IMR-90 (cell line): ENCODE measurements at regions of chr13 and their contacts with region 1.

Region 1: DNA sequence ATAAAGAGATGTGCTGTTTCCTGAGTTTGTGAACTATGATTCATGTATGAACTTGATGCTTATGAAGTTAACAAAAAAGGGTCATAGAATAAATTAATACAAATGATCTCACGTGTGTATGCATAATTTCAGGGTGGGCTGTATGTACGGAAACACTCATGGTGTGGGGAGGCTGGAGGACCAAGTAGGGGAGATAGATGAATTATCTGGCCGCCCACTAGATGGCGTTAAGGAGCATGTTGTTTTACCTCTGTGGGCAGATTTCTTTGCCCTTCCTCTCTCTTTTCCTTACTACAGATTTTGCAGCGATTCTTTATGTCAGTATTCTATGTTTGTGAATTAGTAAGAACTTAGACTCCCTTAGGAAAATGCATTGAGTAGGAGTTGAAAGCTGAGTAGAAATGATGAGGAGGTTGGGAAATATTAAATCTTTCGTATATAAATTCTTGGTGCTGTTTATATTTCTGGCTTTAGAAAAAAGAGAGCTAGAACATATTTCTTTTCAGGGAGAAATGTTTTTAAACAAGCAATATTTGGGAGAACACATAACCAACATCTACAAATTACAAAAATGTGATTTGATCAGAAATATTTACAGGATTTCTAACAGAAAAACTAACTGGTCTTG is 47.4 kb upstream of the TMTC4 start:
- DNase-seq: peak; percentile 50
- ATAC-seq: peak; percentile 93
- H3K4me3 ChIP-seq: no peak overlapping the region
- H3K27ac ChIP-seq: no peak overlapping the region
- H3K4me1 ChIP-seq: no peaks in the 10 kb centered on the region
- H3K27me3 ChIP-seq: peaks cover 3% of the 10 kb centered on the region
- CTCF ChIP-seq: peak; percentile 78
- POLR2A ChIP-seq: no peak
- RAD21 ChIP-seq: peak; percentile 65

Region 2: DNA sequence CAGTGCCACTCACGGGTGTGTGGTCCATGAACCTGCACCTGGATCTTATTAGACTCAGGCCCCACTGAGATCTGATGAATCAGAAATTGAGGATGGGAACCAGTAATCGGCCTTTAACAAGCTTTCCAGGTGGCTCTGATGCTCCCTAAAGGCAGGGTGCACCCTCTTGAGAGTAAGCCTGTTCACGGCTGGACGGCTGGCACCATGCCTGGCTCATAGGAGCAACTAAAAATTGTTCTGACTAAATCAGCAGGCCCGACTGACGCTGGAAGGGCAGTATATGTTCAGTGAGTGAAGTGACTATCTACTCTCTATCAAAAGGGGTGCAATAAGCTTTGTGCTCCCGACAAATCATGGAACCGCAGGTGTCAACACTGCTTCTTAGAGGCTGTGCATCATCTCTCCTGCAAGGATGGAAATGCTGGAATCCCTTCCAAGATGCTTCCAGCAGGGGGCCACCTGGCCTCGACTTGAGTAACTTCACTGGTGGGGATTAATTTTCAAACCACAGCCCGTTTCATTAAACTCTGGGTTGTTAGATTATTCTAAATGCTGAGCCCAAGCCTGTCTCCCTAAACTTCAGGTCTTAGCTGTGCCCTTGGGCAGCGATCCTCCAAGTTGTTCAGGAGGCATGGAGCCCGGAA is 75.8 kb before region 1 on chr13:
- CTCF ChIA-PET with region 1: no interaction called
- POLR2A ChIA-PET with region 1: no interaction called
- dilution Hi-C with region 1: no loop called
- in situ Hi-C with region 1: no loop called
- intact Hi-C with region 1: no loop called
- DNase-seq: peak; percentile 31
- ATAC-seq: peak; percentile 63; the same call in 1 of the 2 replicates
- H3K4me3 ChIP-seq: no peak overlapping the region
- H3K27ac ChIP-seq: no peak overlapping the region
- H3K4me1 ChIP-seq: no peaks in the 10 kb centered on the region; the same call in 1 of the 2 replicates
- H3K27me3 ChIP-seq: no peaks in the 10 kb centered on the region
- CTCF ChIP-seq: peak; percentile 48
- POLR2A ChIP-seq: no peak
- RAD21 ChIP-seq: peak; percentile 33; the same call in 1 of the 2 replicates

Region 3: DNA sequence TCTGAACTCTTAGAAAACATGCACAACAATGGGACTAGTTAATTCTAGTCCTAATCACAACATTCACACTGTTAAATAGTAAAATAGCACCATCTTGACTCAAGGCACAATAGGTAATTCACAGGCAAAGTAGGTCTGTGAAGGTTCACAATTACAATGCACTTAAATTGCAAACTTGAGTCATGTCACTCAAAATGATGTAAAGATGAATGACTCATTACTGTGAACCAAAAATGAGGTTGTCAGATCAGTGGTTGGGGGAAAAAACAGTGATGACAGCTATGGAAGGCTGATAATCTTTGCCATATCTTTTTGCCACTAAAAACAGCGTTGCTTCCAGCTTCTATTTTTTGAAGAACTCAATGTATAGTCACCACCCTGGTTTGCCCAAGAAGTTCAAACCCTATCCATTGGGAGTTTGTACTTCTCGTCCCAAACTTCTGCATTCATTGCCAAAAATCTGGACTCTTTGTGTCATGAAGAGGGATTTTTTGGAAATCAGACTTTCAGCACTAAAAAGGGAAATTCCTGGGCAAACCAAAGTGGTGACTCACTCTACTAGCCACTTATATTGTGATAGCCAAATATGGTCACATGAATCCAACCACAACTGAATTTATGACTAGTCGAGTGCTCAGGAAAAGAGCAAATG is 153.5 kb after region 1 on chr13:
- CTCF ChIA-PET with region 1: no interaction called
- POLR2A ChIA-PET with region 1: interaction called, 14 read pairs
- dilution Hi-C with region 1: no loop called
- in situ Hi-C with region 1: no loop called
- intact Hi-C with region 1: no loop called
- DNase-seq: peak; percentile 96
- ATAC-seq: peak; percentile 94
- H3K4me3 ChIP-seq: no peak overlapping the region
- H3K27ac ChIP-seq: peak overlapping the region; percentile 61
- H3K4me1 ChIP-seq: peaks cover 9% of the 10 kb centered on the region
- H3K27me3 ChIP-seq: no peaks in the 10 kb centered on the region
- CTCF ChIP-seq: no peak
- POLR2A ChIP-seq: no peak
- RAD21 ChIP-seq: no peak

Region 4: GRCh38 chr13:100987953-100988352 is 266.0 kb after region 1 on chr13:
- CTCF ChIA-PET with region 1: interaction called, 6 read pairs
- POLR2A ChIA-PET with region 1: no interaction called
- dilution Hi-C with region 1: no loop called
- in situ Hi-C with region 1: no loop called
- intact Hi-C with region 1: loop called (anchors 1 kb)
- DNase-seq: peak; percentile 26
- ATAC-seq: peak; percentile 66
- H3K4me3 ChIP-seq: no peak overlapping the region
- H3K27ac ChIP-seq: no peak overlapping the region
- H3K4me1 ChIP-seq: no peaks in the 10 kb centered on the region
- H3K27me3 ChIP-seq: no peaks in the 10 kb centered on the region
- CTCF ChIP-seq: peak; percentile 50
- POLR2A ChIP-seq: no peak
- RAD21 ChIP-seq: peak; percentile 60

Region 5: DNA sequence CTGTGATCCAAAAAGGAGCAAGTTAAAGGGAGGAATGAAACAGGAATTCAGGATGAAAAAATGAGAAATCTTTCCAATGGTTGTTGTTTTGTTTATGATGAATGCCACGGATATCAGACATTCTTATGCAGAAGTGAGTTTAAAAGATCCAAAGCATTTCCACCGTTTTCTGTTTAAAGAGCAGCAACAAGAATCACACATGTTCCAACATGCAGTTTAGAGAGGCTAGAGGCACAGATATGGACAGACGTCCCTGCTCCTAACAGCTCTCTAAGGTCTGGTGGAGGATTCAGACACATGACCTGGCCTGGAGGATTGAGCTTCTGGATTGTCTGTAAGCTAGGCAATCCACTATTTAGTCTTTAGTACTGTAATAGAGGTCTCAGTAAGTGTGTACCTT is 314.0 kb after region 1 on chr13:
- CTCF ChIA-PET with region 1: no interaction called
- POLR2A ChIA-PET with region 1: no interaction called
- dilution Hi-C with region 1: no loop called
- in situ Hi-C with region 1: no loop called
- intact Hi-C with region 1: no loop called
- DNase-seq: no peak
- ATAC-seq: no peak
- H3K4me3 ChIP-seq: no peak overlapping the region
- H3K27ac ChIP-seq: no peak overlapping the region
- H3K4me1 ChIP-seq: no peaks in the 10 kb centered on the region
- H3K27me3 ChIP-seq: no peaks in the 10 kb centered on the region; the same call in 1 of the 2 replicates
- CTCF ChIP-seq: no peak
- POLR2A ChIP-seq: no peak
- RAD21 ChIP-seq: no peak

Region 6: GRCh38 chr13:101098873-101099272 is 376.9 kb after region 1 on chr13:
- CTCF ChIA-PET with region 1: interaction called, 4 read pairs
- POLR2A ChIA-PET with region 1: no interaction called
- dilution Hi-C with region 1: no loop called
- in situ Hi-C with region 1: no loop called
- intact Hi-C with region 1: loop called (anchors 2 kb)
- DNase-seq: peak; percentile 7
- ATAC-seq: peak; percentile 35; the same call in 1 of the 2 replicates
- H3K4me3 ChIP-seq: no peak overlapping the region
- H3K27ac ChIP-seq: no peak overlapping the region
- H3K4me1 ChIP-seq: no peaks in the 10 kb centered on the region
- H3K27me3 ChIP-seq: no peaks in the 10 kb centered on the region
- CTCF ChIP-seq: no peak
- POLR2A ChIP-seq: no peak
- RAD21 ChIP-seq: no peak

Region 7: GRCh38 chr13:101155920-101156319 is 433.9 kb after region 1 on chr13:
- CTCF ChIA-PET with region 1: no interaction called
- POLR2A ChIA-PET with region 1: interaction called, 20 read pairs
- dilution Hi-C with region 1: no loop called
- in situ Hi-C with region 1: no loop called
- intact Hi-C with region 1: no loop called
- DNase-seq: no peak
- ATAC-seq: no peak
- H3K4me3 ChIP-seq: no peak overlapping the region
- H3K27ac ChIP-seq: no peak overlapping the region
- H3K4me1 ChIP-seq: no peaks in the 10 kb centered on the region
- H3K27me3 ChIP-seq: no peaks in the 10 kb centered on the region
- CTCF ChIP-seq: peak; percentile 29
- POLR2A ChIP-seq: no peak
- RAD21 ChIP-seq: no peak